H1 (cell line): ENCODE measurements at regions of chr20 and their contacts with region 1.

Region 1: GRCh38 chr20:62420951-62421715 is 6.2 kb downstream of the RBBP8NL start:
- DNase-seq: no peak
- H3K4me3 ChIP-seq: no peak overlapping the region
- H3K27ac ChIP-seq: no peak overlapping the region
- H3K4me1 ChIP-seq: peaks cover 0 to 13% (median under 1%) of the 10 kb centered on the region in 4 experiments; a peak in 5 of 7 replicates
- H3K27me3 ChIP-seq: no peaks in the 10 kb centered on the region
- CTCF ChIP-seq: no peak
- EP300 ChIP-seq: no peak
- POLR2A ChIP-seq: no peak
- RAD21 ChIP-seq: no peak

Region 2: GRCh38 chr20:62401331-62401779 is 19.8 kb before region 1 on chr20:
- CTCF ChIA-PET with region 1: interaction called, 11 read pairs
- POLR2A ChIA-PET with region 1: interaction called, 3 read pairs
- DNase-seq: peak in 1 of 2 experiments; percentile 85
- H3K4me3 ChIP-seq: no peak overlapping the region
- H3K27ac ChIP-seq: no peak overlapping the region
- H3K4me1 ChIP-seq: peaks cover 0 to 13% (median 6%) of the 10 kb centered on the region in 4 experiments; a peak in 6 of 7 replicates
- H3K27me3 ChIP-seq: 0 out of 7 replicates have a peak, but pooled peaks cover 0 to 2% (median 0%) of the 10 kb centered on the region in 4 experiments
- CTCF ChIP-seq: peak; percentile 69 to 89 (median 88)
- EP300 ChIP-seq: no peak
- POLR2A ChIP-seq: no peak
- RAD21 ChIP-seq: peak; percentile 52 to 70

Region 3: GRCh38 chr20:62636446-62636845 is 215.3 kb after region 1 on chr20:
- CTCF ChIA-PET with region 1: no interaction called
- POLR2A ChIA-PET with region 1: no interaction called
- DNase-seq: no peak
- H3K4me3 ChIP-seq: no peak overlapping the region
- H3K27ac ChIP-seq: no peak overlapping the region
- H3K4me1 ChIP-seq: peaks cover 0 to 14% (median 4%) of the 10 kb centered on the region in 4 experiments; a peak in 4 of 7 replicates
- H3K27me3 ChIP-seq: peaks cover 0 to 13% (median 11%) of the 10 kb centered on the region in 4 experiments; a peak in 5 of 7 replicates
- CTCF ChIP-seq: no peak
- EP300 ChIP-seq: no peak
- POLR2A ChIP-seq: no peak
- RAD21 ChIP-seq: no peak